ENCODE measurements at regions of chr2 and their contacts with region 1.

Region 1: DNA sequence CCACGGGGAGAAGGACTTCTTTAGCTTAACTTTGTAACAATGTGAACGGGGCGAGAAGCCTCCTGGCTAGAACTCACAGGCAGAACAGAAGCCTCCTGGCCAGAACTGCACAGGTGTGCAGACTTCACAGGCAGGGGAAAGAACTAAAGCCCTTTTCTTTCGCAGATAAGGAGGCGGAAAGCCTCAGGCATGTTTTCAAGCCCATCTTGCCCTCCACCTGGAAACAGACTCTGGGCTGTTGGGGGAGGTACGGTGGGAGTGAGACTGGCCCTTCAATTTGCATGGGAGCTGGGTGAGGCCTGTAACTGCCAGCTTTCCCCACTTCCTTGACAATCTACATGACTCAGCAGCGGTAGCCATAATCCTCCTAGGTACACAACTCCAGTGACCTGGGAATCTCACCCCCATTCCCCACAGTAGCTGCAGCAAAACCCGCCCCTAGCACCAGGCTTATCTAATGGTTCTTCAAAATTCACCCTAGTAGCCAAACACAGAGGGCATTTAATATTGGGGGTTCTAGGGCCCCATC is 22.9 kb upstream of the ABCA12 start:
- DNase-seq: no peak
- H3K4me3 ChIP-seq: no peak overlapping the region
- H3K27ac ChIP-seq: no peak overlapping the region
- H3K4me1 ChIP-seq: no peaks in the 10 kb centered on the region
- H3K27me3 ChIP-seq: no peaks in the 10 kb centered on the region
- CTCF ChIP-seq: no peak
- POLR2A ChIP-seq: no peak

Region 2: DNA sequence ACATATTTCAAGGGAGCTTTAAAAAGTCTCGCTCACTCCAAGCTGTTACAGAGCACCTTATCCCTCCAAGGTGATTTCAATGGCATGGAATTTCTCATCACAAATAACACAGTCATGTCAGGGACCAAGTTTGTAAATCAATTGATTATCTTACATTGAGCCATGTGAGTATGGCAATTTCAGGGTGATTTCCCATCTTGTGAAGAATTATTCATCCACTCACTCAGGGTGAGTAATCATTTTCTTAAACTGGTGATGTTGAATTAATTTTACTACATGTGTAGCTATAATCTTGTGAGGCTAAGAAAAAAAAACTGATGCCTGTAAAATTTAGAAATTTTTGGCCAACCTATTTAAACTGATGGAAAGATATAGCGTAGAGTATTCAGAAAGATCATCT is 19.7 kb before region 1 on chr2:
- intact Hi-C with region 1: loop called (anchors 1 kb)
- DNase-seq: no peak
- H3K4me3 ChIP-seq: no peak overlapping the region
- H3K27ac ChIP-seq: no peak overlapping the region
- H3K4me1 ChIP-seq: no peaks in the 10 kb centered on the region
- H3K27me3 ChIP-seq: no peaks in the 10 kb centered on the region
- CTCF ChIP-seq: no peak
- POLR2A ChIP-seq: no peak

Measured in breast epithelium (tissue), 4 donors.